Calu3 (cell line): ENCODE measurements at regions of chr7 and their contacts with region 1.

Region 1: GRCh38 chr7:152145853-152146466 is 120.5 kb downstream of the GALNT11 start:
- DNase-seq: peak; percentile 26
- H3K4me3 Mint-ChIP-seq: no peak overlapping the region
- H3K27ac Mint-ChIP-seq: no peak overlapping the region
- H3K4me1 Mint-ChIP-seq: no peaks in the 10 kb centered on the region
- H3K27me3 Mint-ChIP-seq: no peaks in the 10 kb centered on the region
- CTCF ChIP-seq: peak; percentile 51

Region 2: DNA sequence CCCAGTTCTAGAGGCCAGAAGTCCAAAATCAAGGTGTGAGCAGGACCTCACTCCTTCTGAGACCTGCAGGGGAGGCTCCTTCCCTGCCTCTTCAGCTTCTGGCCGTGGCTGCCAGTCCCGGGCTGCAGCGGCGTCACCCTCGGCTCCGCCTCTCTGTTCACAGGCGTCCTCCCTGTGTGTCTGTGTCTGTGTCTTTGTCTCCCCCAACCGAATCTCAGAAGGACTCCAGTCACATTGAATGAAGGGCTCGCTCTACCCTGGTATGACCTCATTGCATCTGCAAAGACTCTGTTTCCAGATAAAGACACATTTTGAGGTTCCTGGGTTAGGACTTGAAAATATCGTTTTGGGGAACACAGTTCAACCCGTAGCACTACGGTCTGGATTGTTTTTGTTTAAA is 153.6 kb before region 1 on chr7:
- CTCF ChIA-PET with region 1: no interaction called
- intact Hi-C with region 1: loop called (anchors 2 kb)
- DNase-seq: peak; percentile 70
- H3K4me3 Mint-ChIP-seq: no peak overlapping the region
- H3K27ac Mint-ChIP-seq: no peak overlapping the region
- H3K4me1 Mint-ChIP-seq: peaks cover 11% of the 10 kb centered on the region
- H3K27me3 Mint-ChIP-seq: peaks cover 38% of the 10 kb centered on the region
- CTCF ChIP-seq: no peak

Region 3: GRCh38 chr7:152395112-152395511 is 249.2 kb after region 1 on chr7:
- CTCF ChIA-PET with region 1: no interaction called
- intact Hi-C with region 1: no loop called
- DNase-seq: no peak
- H3K4me3 Mint-ChIP-seq: no peak overlapping the region
- H3K27ac Mint-ChIP-seq: no peak overlapping the region
- H3K4me1 Mint-ChIP-seq: peaks cover 37% of the 10 kb centered on the region
- H3K27me3 Mint-ChIP-seq: no peaks in the 10 kb centered on the region
- CTCF ChIP-seq: no peak